ENCODE measurements at regions of chrX and their contacts with region 1.

Region 1: DNA sequence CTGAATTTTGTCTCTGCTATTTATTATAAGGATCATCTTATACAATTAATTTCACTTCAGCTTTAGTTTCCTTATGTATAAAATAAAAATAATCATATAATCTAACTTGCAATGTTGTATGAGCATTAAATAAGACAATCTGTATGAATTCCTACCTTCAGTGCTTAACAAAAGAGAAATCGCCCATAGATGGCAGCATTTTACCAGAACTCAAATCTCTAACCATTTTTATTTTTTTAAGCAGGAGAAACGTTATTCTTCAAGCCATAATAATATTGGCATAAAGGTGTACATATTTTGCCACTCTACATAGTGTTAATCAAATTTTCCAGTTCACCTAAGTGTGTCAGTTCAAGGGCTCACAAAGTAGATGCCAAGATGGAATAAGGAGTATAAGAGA is 78.8 kb downstream of the TMEM47 start:
- DNase-seq: no peak

Region 2: DNA sequence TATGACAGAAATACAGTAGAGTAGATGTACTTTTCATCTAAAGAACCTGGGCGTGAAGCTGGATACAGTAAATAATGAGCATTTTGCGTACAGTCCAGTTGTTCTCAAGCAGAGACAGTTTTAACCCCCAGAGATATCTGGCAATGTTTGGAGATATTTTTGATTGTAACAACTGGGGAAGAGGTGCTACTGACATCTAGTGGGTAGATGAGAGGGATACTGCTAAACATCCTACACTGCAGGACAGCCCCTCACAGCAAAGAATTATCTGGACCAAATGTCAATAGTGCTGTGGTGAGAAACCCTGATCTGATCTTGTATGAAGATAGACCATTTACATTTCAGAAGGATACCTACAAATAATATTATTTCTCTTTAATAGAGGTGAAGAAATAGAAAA is 245.9 kb before region 1 on chrX:
- intact Hi-C with region 1: no loop called
- DNase-seq: no peak

Region 3: DNA sequence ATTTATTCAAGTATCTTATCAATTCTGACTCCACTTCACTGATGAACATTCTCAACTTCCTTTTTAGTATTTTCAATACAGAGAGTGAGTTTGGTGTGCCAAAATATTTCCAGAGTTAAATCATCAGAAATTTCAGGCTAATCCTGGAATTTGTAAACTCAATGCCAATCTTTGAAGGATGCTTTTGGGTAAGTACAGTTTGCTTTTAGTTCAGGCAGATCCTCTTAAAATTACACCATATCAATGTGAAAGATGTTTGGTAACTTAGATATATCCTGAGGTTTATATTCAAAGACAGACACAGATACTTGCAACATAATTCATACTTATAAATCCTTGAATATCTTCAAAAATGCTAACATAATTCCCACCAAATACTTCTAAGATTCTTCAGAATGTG is 288.4 kb after region 1 on chrX:
- intact Hi-C with region 1: loop called (anchors 10 kb)
- DNase-seq: no peak

Measured in cardiac septum (tissue), 1 donor.